Mammary epithelial cell (primary cell): ENCODE measurements at regions of chr17 and their contacts with region 1.

Region 1: GRCh38 chr17:72120642-72121163 is at the start of gene SOX9:
- DNase-seq: peak; percentile 98
- H3K4me3 ChIP-seq: peak within 1 kb of the TSS; percentile 67 to 98 (median 96)
- H3K27ac ChIP-seq: peak within 1 kb of the TSS; percentile 88
- H3K4me1 ChIP-seq: peaks cover 55% of the 10 kb centered on the region
- H3K27me3 ChIP-seq: no peaks in the 10 kb centered on the region
- CTCF ChIP-seq: no peak
- total RNA-seq, gene SOX9: 77.4 to 81.9 TPM

Region 2: DNA sequence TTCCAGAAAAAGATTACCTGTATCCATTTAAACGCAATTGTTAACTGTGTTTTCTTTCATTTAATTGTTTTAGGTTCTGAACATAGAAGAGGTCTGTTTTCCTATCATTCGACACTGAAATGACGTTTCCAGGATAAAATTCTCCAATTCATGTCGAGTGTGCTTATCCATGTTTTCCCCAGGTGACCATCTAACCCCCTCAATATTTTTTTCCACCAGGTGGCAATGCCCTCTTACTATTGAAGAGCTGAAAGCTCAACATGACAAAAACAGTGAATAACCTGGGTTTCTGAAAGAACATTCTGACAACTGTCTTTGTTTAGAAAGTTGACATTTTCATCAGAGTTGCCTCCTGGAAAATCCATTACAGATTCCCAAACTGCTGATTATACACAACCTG is 1002.7 kb before region 1 on chr17:
- CTCF ChIA-PET with region 1: no interaction called
- dilution Hi-C with region 1: no loop called
- in situ Hi-C with region 1: loop called (anchors 25 kb)
- intact Hi-C with region 1: loop called (anchors 1 kb)
- DNase-seq: peak; percentile 62
- H3K4me3 ChIP-seq: no peak overlapping the region
- H3K27ac ChIP-seq: peak overlapping the region; percentile 15
- H3K4me1 ChIP-seq: peaks cover 11% of the 10 kb centered on the region
- H3K27me3 ChIP-seq: no peaks in the 10 kb centered on the region
- CTCF ChIP-seq: peak; percentile 68 to 73

Region 3: DNA sequence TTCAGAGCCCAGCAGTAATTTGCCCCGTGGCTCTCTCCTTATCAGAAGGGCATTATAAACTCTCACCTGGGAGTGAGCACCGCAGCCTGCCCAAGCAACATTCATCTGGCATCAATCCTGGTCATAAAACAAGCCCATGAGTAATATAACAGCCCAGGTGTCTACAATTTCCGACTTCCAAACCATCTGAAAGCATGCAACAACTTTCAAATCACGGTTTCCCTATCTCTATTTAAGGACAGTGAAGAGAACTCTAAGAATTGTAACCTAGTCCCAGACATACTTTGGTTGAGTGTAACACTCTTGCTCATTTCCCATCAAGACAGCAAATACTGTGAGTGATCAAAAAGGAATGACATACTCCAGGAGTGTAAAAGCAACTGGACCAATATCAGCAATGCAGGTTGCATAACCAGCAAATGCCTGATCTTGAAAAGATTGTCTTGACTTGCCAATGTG is 487.3 kb before region 1 on chr17:
- CTCF ChIA-PET with region 1: interaction called, 3 read pairs
- dilution Hi-C with region 1: no loop called
- in situ Hi-C with region 1: no loop called
- intact Hi-C with region 1: loop called (anchors 2 kb)
- DNase-seq: peak; percentile 99
- H3K4me3 ChIP-seq: peak overlapping the region in 1 of 3 experiments; percentile 14
- H3K27ac ChIP-seq: peak overlapping the region; percentile 75
- H3K4me1 ChIP-seq: peaks cover 43% of the 10 kb centered on the region
- H3K27me3 ChIP-seq: no peaks in the 10 kb centered on the region
- CTCF ChIP-seq: no peak

Region 4: GRCh38 chr17:71885662-71886061 is 235.0 kb before region 1 on chr17:
- CTCF ChIA-PET with region 1: no interaction called
- dilution Hi-C with region 1: no loop called
- in situ Hi-C with region 1: no loop called
- intact Hi-C with region 1: loop called (anchors 10 kb)
- DNase-seq: no peak
- H3K4me3 ChIP-seq: no peak overlapping the region
- H3K27ac ChIP-seq: no peak overlapping the region
- H3K4me1 ChIP-seq: peaks cover 7% of the 10 kb centered on the region
- H3K27me3 ChIP-seq: no peaks in the 10 kb centered on the region
- CTCF ChIP-seq: no peak

Region 5: GRCh38 chr17:72063262-72063661 is 57.4 kb before region 1 on chr17:
- CTCF ChIA-PET with region 1: interaction called, 27 read pairs
- dilution Hi-C with region 1: no loop called
- in situ Hi-C with region 1: no loop called
- intact Hi-C with region 1: no loop called
- DNase-seq: no peak
- H3K4me3 ChIP-seq: no peak overlapping the region
- H3K27ac ChIP-seq: no peak overlapping the region
- H3K4me1 ChIP-seq: peaks cover 15% of the 10 kb centered on the region
- H3K27me3 ChIP-seq: no peaks in the 10 kb centered on the region
- CTCF ChIP-seq: no peak

Region 6: DNA sequence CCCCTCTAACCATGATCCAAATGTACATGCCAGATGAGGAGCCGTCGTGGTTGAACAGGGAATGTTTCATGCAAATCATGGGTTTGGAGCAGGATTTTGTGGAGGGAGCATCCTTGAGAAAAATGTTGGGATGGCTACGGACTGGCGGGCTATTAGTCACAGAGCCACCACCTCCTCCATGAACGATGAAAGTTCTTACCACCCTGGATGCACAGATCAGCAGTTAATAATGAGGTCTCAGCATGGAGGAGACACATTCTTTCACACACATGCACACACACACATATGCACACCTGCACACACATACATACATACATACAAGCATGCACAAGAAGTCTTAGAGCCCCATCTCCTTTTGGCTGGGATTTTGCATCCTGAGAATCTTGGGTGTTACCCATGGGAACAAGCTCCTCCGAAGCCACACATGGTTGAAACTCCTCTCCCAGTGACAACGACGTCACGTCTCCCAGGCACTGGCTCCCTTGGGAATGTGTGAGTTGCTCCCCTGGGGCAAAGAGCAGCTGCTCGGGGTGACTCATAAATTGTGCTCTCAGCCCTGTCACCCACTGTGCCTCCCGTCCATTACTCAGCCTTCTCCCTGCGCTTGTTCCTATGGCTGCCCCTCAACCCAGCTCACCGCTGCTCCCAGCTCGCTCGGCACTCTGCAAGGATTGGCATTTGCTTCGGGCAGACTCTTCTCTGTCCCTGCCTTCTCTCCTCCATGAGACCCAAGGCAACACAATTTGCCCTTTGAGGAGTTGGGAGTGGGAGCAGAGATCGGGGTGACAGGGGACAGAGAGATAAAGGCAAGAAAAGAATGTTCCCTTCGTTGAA is 344.7 kb after region 1 on chr17:
- CTCF ChIA-PET with region 1: no interaction called
- dilution Hi-C with region 1: no loop called
- in situ Hi-C with region 1: no loop called
- intact Hi-C with region 1: loop called (anchors 2 kb)
- DNase-seq: peak; percentile 99
- H3K4me3 ChIP-seq: peak overlapping the region in 1 of 3 experiments; percentile 2
- H3K27ac ChIP-seq: peak overlapping the region; percentile 98
- H3K4me1 ChIP-seq: peaks cover 64% of the 10 kb centered on the region
- H3K27me3 ChIP-seq: no peaks in the 10 kb centered on the region
- CTCF ChIP-seq: no peak